ENCODE measurements at regions of chr11 and their contacts with region 1.

Region 1: GRCh38 chr11:67118801-67119584 is at the start of gene KDM2A:
- DNase-seq: peak; percentile 93 to 100 (median 98)
- ATAC-seq: peak; percentile 92
- H3K4me3 ChIP-seq: peak within 1 kb of the TSS; percentile 86
- H3K4me3 Mint-ChIP-seq: peak within 1 kb of the TSS; percentile 95 to 99 (median 98)
- H3K27ac ChIP-seq: peak within 1 kb of the TSS; percentile 98
- H3K27ac Mint-ChIP-seq: peak within 1 kb of the TSS; percentile 84 to 98 (median 95)
- H3K4me1 ChIP-seq: peaks cover 3 to 7% of the 10 kb centered on the region in 2 donors
- H3K4me1 Mint-ChIP-seq: peaks cover 25 to 48% (median 40%) of the 10 kb centered on the region in 7 donors
- H3K27me3 ChIP-seq: no peaks in the 10 kb centered on the region
- H3K27me3 Mint-ChIP-seq: peaks cover 0 to 5% (median 0%) of the 10 kb centered on the region in 5 donors
- total RNA-seq, gene KDM2A: 146 to 298 (median 233) TPM

Region 2: DNA sequence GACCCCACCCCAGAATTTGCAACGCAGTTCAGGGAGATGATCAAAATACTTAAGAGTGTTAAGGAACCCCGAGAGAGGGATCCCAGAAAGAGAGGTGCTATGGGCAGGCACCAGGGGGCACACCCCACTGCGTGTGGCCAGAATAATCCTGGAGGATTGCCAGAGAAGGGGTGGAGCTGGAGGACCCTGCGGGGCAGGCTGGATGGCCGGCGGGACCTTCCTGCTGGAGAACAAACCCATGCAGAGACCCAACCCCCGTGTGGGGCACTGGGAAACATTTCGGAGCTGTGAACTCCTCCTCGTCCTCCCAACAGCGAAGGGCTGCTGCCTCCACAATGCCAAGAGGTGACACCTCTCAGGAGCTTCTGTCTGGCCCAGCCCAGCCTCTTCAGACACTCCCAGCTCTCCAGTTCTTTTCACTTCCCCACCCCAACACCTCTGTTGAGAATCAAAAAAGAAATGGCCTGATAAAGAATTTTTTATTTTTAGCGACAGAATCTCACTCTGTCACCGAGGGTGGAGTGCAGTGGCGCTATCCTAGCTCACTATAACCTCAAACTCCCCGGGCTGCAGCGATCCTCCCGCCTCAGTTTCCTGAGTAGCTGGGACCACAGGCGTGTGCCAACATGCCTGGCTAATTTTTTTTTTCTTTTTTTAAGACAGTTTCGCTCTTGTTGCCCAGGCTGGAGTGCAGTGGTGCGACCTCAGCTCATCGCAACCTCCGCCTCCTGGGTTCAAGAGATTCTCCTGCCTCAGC is 36.8 kb before region 1 on chr11:
- CTCF ChIA-PET with region 1: interaction called, 13 read pairs
- POLR2A ChIA-PET with region 1: interaction called, 16 read pairs
- intact Hi-C with region 1: loop called (anchors 1 to 5 kb)
- DNase-seq: peak in 3 of 9 donors; percentile 5 to 13 (median 11)
- ATAC-seq: no peak
- H3K4me3 ChIP-seq: no peak overlapping the region
- H3K4me3 Mint-ChIP-seq: peak overlapping the region; percentile 12 to 70 (median 60)
- H3K27ac ChIP-seq: no peak overlapping the region
- H3K27ac Mint-ChIP-seq: peak overlapping the region in 3 of 9 donors; percentile 15 to 72 (median 17)
- H3K4me1 ChIP-seq: peaks cover 7 to 10% of the 10 kb centered on the region in 2 donors
- H3K4me1 Mint-ChIP-seq: peaks cover 5 to 22% (median 15%) of the 10 kb centered on the region in 7 donors
- H3K27me3 ChIP-seq: no peaks in the 10 kb centered on the region
- H3K27me3 Mint-ChIP-seq: peaks cover 0 to 5% (median 0%) of the 10 kb centered on the region in 5 donors

Region 3: DNA sequence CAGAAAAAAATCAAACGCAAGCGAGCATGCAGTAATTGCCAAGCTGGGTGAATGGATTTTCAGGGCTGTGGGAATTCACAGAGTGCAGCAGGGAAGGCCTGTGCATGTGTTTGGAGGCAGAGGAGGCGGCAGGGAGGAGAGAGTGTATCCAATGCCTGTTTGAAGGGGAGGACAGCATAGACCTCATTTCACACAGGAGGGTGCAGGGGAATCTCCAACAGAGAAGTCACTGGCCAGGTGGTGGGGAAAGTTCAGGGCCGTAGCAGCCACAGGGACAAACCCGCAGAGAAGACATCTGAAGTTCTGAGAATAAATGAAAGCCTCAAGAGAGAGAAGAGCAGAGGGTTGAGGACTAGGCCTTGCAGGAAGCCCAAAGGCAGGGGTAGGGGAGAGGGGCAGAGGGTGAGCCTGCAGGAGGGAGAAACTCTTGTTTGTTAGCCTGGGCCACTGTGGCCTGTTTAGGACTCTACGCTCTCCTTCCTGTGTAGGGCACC is 19.1 kb before region 1 on chr11:
- CTCF ChIA-PET with region 1: interaction called, 3 read pairs
- POLR2A ChIA-PET with region 1: interaction called, 72 read pairs
- intact Hi-C with region 1: loop called in 1 of 2 experiments (anchors 1 kb)
- DNase-seq: peak in 1 of 9 donors; percentile 19
- ATAC-seq: no peak
- H3K4me3 ChIP-seq: no peak overlapping the region
- H3K4me3 Mint-ChIP-seq: peak overlapping the region in 3 of 10 donors; percentile 3 to 50 (median 29)
- H3K27ac ChIP-seq: peak overlapping the region; percentile 48
- H3K27ac Mint-ChIP-seq: peak overlapping the region; percentile 54 to 91 (median 86)
- H3K4me1 ChIP-seq: peaks cover 7 to 27% of the 10 kb centered on the region in 2 donors
- H3K4me1 Mint-ChIP-seq: peaks cover 28 to 52% (median 39%) of the 10 kb centered on the region in 7 donors
- H3K27me3 ChIP-seq: no peaks in the 10 kb centered on the region
- H3K27me3 Mint-ChIP-seq: no peaks in the 10 kb centered on the region

Region 4: DNA sequence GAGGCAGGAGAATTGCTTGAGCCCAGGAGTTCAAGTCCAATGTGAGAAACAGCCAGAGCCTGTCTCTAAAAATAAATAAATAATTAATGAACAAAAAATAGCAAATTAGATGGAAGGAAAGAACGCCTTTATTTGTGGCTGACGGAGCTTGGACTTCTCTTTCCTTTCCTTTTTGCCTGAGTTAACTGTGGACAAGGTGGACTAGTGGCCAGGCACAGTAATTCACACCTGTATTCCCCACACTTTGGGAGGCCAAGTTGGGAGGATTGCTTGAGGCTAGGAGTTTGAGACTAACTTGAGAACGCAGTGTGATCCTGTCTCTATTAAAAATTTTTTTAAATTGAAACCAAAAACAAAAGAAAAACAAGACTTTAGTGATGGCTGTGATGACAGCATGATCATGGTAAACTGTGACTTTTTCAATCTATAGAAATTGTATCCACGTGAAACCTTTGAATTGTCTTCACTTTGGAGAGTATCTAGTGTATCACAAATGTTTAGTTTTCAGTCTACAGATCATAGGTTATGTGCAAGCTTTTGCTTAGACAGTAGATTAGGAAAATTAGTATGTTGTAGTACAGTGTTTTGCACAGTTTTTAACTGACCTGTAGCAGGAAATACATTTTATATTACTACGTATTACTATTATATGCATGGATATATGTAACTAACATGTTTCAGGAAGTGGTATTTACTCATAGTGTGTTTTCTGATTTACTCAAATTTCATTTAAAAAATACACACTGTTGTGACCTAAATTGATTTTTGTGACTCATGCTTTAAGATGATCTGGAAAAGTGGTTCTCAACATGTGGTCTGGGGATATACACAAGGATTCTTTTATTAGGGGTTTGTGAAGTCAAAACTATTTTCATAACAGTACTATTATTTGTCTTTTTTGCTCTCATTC is 42.1 kb after region 1 on chr11:
- CTCF ChIA-PET with region 1: no interaction called
- POLR2A ChIA-PET with region 1: no interaction called
- intact Hi-C with region 1: loop called in 1 of 2 experiments (anchors 5 kb)
- DNase-seq: no peak
- ATAC-seq: no peak
- H3K4me3 ChIP-seq: no peak overlapping the region
- H3K4me3 Mint-ChIP-seq: no peak overlapping the region
- H3K27ac ChIP-seq: no peak overlapping the region
- H3K27ac Mint-ChIP-seq: peak overlapping the region in 8 of 9 donors; percentile 31 to 76 (median 46)
- H3K4me1 ChIP-seq: peaks cover 0 to 6% of the 10 kb centered on the region in 2 donors
- H3K4me1 Mint-ChIP-seq: peaks cover 21 to 78% (median 62%) of the 10 kb centered on the region in 7 donors
- H3K27me3 ChIP-seq: no peaks in the 10 kb centered on the region
- H3K27me3 Mint-ChIP-seq: no peaks in the 10 kb centered on the region

Region 5: DNA sequence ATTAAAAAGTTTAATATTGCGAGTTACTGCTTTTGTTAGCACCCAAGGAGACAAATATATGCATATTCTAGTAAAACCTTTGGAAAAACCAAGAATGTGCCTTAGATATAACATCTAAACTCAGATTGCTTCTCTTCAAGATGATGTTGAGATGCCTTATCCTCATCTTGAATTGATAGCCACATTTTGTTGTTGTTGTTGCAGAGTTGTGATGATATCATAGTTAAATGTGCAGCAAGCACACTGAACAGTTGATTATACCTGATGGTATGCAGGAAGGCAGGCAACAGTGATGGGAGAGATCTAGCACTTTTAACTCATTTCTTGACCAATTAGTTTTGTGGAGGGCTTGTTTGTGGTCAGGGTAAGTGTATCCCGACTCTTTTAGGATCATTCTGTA is 48.1 kb after region 1 on chr11:
- CTCF ChIA-PET with region 1: interaction called, 5 read pairs
- POLR2A ChIA-PET with region 1: no interaction called
- intact Hi-C with region 1: loop called (anchors 1 to 5 kb)
- DNase-seq: no peak
- ATAC-seq: no peak
- H3K4me3 ChIP-seq: no peak overlapping the region
- H3K4me3 Mint-ChIP-seq: no peak overlapping the region
- H3K27ac ChIP-seq: peak overlapping the region; percentile 25
- H3K27ac Mint-ChIP-seq: peak overlapping the region in 4 of 9 donors; percentile 12 to 63 (median 32)
- H3K4me1 ChIP-seq: peaks cover 0 to 3% of the 10 kb centered on the region in 2 donors
- H3K4me1 Mint-ChIP-seq: peaks cover 20 to 66% (median 54%) of the 10 kb centered on the region in 7 donors
- H3K27me3 ChIP-seq: no peaks in the 10 kb centered on the region
- H3K27me3 Mint-ChIP-seq: no peaks in the 10 kb centered on the region

Region 6: DNA sequence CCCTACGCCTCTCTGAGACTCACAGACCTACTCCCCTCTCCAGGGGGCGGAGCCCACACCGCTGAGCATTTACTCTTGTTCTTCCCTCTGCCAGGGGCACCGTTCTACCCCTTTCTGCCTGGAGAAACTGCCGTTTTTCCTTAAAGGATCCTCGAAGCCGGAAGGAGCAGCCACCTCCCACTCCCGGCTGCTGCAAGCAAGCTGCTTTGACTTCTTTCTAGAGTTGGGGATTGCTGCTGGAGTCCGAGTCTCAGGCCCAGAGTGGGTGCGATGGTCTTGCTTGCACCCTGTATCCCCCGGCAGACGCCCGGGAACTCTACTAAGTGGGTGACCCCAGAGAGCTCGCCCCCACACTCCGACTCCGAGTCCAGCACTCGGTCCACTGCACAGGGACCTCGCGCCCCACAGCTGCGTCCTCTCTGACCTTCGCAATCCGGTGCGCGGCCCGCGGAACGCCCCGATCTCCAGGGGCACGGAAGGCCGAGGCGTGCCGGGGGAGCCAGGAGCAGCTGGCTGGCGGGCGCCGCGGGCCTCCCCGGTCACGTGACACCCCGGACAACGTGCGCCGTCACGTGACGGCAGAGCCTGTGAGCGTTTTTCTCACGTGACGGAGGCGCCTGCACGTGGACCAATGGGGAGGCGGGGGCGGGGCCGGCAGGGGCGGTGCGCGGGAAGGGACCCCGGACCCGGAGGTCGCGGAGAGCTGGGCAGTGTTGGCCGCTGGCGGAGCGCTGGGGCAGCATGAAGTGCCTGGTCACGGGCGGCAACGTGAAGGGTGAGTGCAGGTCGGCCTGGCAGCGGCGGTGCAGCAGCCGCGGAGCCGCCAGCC is 272.5 kb after region 1 on chr11 and contains the start of gene RAD9A:
- CTCF ChIA-PET with region 1: no interaction called
- POLR2A ChIA-PET with region 1: no interaction called
- intact Hi-C with region 1: loop called in 1 of 2 experiments (anchors 5 kb)
- DNase-seq: peak; percentile 80 to 94 (median 87)
- ATAC-seq: peak; percentile 90
- H3K4me3 ChIP-seq: peak within 1 kb of the TSS; percentile 49
- H3K4me3 Mint-ChIP-seq: peak within 1 kb of the TSS; percentile 84 to 95 (median 88)
- H3K27ac ChIP-seq: peak within 1 kb of the TSS; percentile 83
- H3K27ac Mint-ChIP-seq: peak within 1 kb of the TSS; percentile 47 to 92 (median 82)
- H3K4me1 ChIP-seq: peaks cover 15 to 16% of the 10 kb centered on the region in 2 donors
- H3K4me1 Mint-ChIP-seq: peaks cover 27 to 47% (median 34%) of the 10 kb centered on the region in 7 donors
- H3K27me3 ChIP-seq: no peaks in the 10 kb centered on the region
- H3K27me3 Mint-ChIP-seq: peaks cover 0 to 3% (median 0%) of the 10 kb centered on the region in 5 donors
- total RNA-seq, gene RAD9A: 25.6 to 48.0 (median 45.0) TPM

Measured in naive thymus-derived CD4-positive, alpha-beta T cell (primary cell).